MCF 10A (cell line): ENCODE measurements at regions of chr1 and their contacts with region 1.

Region 1: DNA sequence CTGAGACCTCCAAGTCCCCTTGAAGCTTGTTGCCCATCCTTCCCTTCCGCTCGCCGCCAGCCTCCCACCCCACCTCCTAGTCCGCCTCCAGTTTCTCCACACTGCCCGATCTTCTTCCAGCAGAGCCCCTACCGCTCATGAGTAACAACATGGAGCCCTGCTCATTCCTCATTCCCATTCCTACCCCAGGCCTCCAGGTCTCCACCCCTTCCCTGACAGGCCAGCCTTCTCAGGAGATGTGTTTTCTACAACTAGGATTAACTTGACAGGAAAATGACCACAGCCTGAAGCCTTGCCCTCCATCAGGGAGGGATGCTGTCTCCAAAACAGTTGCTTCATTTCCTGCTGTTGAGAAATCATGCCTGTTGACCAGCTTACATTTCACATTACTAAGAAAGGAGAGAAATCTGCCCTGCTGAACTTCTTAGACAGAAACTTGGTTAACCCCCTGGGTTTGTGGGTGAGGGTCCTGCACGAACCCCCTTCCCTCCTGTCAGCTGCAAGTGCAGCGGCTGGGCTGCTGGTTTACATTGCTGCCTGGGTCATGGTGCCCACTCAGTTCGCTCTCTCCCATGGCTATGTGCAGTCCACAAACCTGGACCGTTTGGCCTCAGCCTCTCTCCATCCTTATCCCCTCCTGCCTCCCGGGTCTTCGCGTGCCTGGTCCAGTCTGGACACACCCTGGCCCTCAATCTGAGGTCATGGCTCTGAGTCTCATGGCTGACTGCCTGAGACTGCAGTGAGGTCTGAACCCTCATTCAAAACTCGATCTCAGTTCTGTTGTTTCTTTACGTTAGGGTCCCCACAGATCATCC is 16.1 kb upstream of the CHI3L1 start:
- DNase-seq: peak; percentile 97
- H3K4me3 Mint-ChIP-seq: no peak overlapping the region
- H3K27ac Mint-ChIP-seq: no peak overlapping the region
- H3K4me1 Mint-ChIP-seq: peaks cover 22% of the 10 kb centered on the region
- H3K27me3 Mint-ChIP-seq: peaks cover 7% of the 10 kb centered on the region
- CTCF ChIP-seq: no peak

Region 2: GRCh38 chr1:203186446-203187303 is 16.0 kb before region 1 on chr1 and contains the start of gene CHI3L1:
- CTCF ChIA-PET with region 1: interaction called, 3 read pairs
- POLR2A ChIA-PET with region 1: interaction called, 10 read pairs
- intact Hi-C with region 1: no loop called
- DNase-seq: peak; percentile 97
- H3K4me3 Mint-ChIP-seq: no peak within 1 kb of the TSS
- H3K27ac Mint-ChIP-seq: no peak within 1 kb of the TSS
- H3K4me1 Mint-ChIP-seq: peaks cover 13% of the 10 kb centered on the region
- H3K27me3 Mint-ChIP-seq: peaks cover 33% of the 10 kb centered on the region
- CTCF ChIP-seq: no peak
- total RNA-seq, gene CHI3L1: 0.75 and 0.88 TPM in 2 replicates